Pancreas (tissue), 10 donors: ENCODE measurements at regions of chr15 and their contacts with region 1.

Region 1: GRCh38 chr15:65384895-65385858 is 7.4 kb upstream of the IGDCC3 start:
- DNase-seq: peak; percentile 75 to 91 (median 84)
- ATAC-seq: peak; percentile 96 to 99 (median 98)
- H3K4me3 ChIP-seq: peak overlapping the region in 2 of 4 donors; percentile 20 to 35
- H3K27ac ChIP-seq: no peak overlapping the region
- H3K4me1 ChIP-seq: no peaks in the 10 kb centered on the region
- H3K27me3 ChIP-seq: no peaks in the 10 kb centered on the region
- CTCF ChIP-seq: peak; percentile 73 to 83 (median 77)

Region 2: DNA sequence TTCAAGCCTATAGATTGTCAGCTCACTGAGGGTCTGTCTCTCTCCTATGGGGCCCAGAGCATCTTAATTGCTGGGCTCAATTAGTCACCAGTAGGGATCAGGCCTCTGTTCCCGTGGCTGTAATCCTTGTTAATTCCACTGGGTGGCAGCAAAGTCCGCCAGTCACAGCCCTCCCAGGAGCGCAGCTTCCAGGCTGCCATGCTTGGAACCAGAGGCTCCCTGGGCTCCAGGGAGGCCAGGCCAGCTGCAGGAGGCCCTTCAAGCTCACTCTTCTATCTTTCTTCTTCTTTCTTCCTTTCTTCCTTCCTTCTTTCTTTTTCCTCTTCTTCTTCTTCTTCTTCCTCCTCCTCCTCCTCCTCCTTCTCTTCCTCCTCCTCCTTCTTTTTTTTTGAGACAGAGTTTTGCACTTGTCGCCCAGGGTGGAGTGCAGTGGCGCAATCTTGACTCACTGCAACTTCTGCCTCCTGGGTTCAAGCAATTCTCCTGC is 66.3 kb before region 1 on chr15:
- intact Hi-C with region 1: loop called (anchors 2 to 10 kb)
- DNase-seq: peak; percentile 67 to 89 (median 80)
- ATAC-seq: peak; percentile 94 to 100 (median 98)
- H3K4me3 ChIP-seq: no peak overlapping the region
- H3K27ac ChIP-seq: no peak overlapping the region
- H3K4me1 ChIP-seq: no peaks in the 10 kb centered on the region
- H3K27me3 ChIP-seq: no peaks in the 10 kb centered on the region
- CTCF ChIP-seq: peak; percentile 82 to 89 (median 86)